Ovary (tissue), 10 donors: ENCODE measurements at regions of chr16 and their contacts with region 1.

Region 1: DNA sequence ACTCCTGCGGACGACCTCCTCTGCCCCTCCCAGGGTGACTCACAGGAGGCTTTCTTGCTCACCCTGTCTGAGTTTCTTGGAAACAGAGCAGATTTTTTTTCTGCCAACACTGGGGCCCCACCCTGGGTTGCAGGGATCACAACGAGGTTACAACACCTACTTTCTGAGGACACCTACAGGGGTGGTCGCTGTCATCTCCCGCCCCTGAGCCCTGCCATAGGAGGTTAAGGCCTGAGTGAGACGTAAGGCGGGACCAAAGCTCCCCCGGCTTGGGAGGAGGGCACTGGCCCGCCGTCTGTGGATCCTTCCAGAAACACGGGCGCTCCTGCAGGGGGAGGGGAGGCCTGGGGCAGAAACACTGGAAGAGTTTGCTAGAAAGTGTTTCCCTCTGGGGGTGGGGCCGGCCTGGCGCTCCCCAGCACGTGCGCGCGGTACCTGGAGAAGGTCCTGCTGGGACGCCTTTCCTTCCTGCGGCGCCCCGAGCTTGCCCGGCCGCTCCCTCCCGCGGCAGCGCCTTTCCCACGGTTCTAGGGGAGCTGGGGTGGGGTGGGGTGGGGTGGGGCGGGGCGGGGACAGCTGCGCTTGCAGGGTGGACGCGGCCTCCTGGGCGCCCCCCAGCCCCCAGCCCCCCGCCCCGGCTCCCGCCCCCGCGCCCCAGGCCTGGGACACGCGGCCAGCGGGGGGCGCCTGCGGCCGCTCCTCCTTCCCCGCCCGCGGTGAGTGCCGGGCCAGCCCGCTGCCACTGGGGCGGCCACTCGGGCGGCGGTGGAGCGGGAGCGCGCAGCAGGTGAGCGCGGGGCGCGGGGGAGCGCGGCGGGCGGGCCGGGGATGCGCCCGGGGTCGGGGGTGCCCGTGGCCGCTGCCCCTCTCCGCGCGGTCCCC is 20.7 kb upstream of the ADCY7 start:
- DNase-seq: peak; percentile 60 to 75 (median 70)
- H3K4me3 ChIP-seq: peak overlapping the region; percentile 43
- H3K27ac ChIP-seq: peak overlapping the region; percentile 65 to 79
- H3K4me1 ChIP-seq: peaks cover 14% of the 10 kb centered on the region
- H3K27me3 ChIP-seq: no peaks in the 10 kb centered on the region
- CTCF ChIP-seq: no peak
- EP300 ChIP-seq: no peak
- POLR2A ChIP-seq: no peak

Region 2: GRCh38 chr16:49932946-49933345 is 312.7 kb before region 1 on chr16:
- intact Hi-C with region 1: no loop called
- DNase-seq: peak in 3 of 5 donors; percentile 37 to 57 (median 43)
- H3K4me3 ChIP-seq: no peak overlapping the region
- H3K27ac ChIP-seq: peak overlapping the region in 1 of 2 donors; percentile 15
- H3K4me1 ChIP-seq: peaks cover 4% of the 10 kb centered on the region
- H3K27me3 ChIP-seq: no peaks in the 10 kb centered on the region
- CTCF ChIP-seq: no peak
- EP300 ChIP-seq: no peak
- POLR2A ChIP-seq: no peak

Region 3: DNA sequence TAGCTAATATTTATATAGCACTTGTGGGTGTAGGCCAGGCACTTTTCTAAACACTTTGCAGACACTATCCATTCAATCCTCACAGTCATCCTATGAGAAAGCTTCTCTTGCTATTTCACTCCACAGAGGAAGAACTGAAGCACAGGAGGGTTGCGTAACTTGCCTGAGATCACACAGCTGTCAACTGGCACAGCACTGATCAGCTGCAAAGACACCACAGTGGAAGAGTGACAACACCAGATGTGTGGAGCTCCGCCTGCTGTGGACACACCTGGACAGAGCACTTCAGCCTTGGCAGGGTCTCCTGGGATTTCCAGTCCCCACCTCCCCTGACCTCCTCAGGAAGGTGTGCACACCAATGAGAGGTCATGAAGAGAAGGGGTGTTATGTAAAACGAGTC is 234.0 kb before region 1 on chr16:
- intact Hi-C with region 1: no loop called
- DNase-seq: no peak
- H3K4me3 ChIP-seq: no peak overlapping the region
- H3K27ac ChIP-seq: no peak overlapping the region
- H3K4me1 ChIP-seq: no peaks in the 10 kb centered on the region
- H3K27me3 ChIP-seq: no peaks in the 10 kb centered on the region
- CTCF ChIP-seq: no peak
- EP300 ChIP-seq: no peak
- POLR2A ChIP-seq: no peak

Region 4: DNA sequence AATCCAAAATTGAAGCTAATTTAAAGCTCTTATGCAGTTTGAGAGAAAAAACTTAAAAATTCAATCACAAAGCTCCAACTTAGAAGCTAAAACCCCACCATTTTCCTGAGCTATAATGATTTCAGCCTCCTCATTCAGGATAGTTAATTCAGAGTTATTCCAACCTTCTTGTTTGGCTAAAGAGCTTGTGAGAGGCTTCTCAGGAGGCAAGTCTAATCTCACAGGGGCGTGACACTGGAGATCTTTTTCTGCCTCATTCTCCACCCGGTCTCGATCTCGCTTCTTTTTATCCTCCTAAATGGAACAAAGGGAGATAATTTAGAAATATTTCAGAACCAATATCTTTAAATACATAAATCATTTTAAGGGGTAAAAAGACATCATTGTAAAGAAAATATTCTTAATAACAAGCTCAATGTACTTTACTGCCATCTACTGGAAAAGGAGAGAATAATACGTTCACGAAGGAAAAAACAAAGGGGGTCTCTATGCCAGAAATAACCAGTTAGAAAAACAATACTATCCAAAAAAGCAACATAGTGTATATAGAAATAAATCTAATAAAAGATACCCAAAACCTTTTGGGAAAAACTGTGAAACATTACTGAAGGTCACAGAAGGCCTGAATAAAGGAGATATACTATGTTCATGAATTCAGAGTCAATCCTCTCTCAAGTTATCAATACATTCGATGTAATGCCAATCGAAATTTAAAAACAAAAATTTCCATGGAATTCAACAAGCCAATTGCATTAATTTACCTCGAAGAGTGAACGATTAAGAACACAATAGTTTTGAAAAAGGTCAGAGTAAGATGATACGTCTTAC is 109.2 kb after region 1 on chr16:
- intact Hi-C with region 1: loop called in 1 of 4 experiments (anchors 10 kb)
- DNase-seq: no peak
- H3K4me3 ChIP-seq: no peak overlapping the region
- H3K27ac ChIP-seq: no peak overlapping the region
- H3K4me1 ChIP-seq: peaks cover 2% of the 10 kb centered on the region
- H3K27me3 ChIP-seq: no peaks in the 10 kb centered on the region
- CTCF ChIP-seq: peak; percentile 12 to 59 (median 32)
- EP300 ChIP-seq: no peak
- POLR2A ChIP-seq: no peak